ENCODE measurements at regions of chr17 and their contacts with region 1.

Region 1: GRCh38 chr17:65231662-65232335 is 94.6 kb downstream of the RGS9 start:
- DNase-seq: peak; percentile 91
- ATAC-seq: peak; percentile 90
- H3K4me3 ChIP-seq: no peak overlapping the region
- H3K27ac ChIP-seq: no peak overlapping the region
- H3K4me1 ChIP-seq: peaks cover 33% of the 10 kb centered on the region
- H3K27me3 ChIP-seq: no peaks in the 10 kb centered on the region
- CTCF ChIP-seq: peak; percentile 98

Region 2: GRCh38 chr17:65268832-65269231 is 37.0 kb after region 1 on chr17:
- CTCF ChIA-PET with region 1: interaction called, 12 read pairs
- POLR2A ChIA-PET with region 1: no interaction called
- intact Hi-C with region 1: no loop called
- DNase-seq: no peak
- ATAC-seq: no peak
- H3K4me3 ChIP-seq: no peak overlapping the region
- H3K27ac ChIP-seq: no peak overlapping the region
- H3K4me1 ChIP-seq: no peaks in the 10 kb centered on the region
- H3K27me3 ChIP-seq: no peaks in the 10 kb centered on the region
- CTCF ChIP-seq: no peak

Region 3: GRCh38 chr17:65523853-65524664 is 292.3 kb after region 1 on chr17:
- CTCF ChIA-PET with region 1: interaction called, 11 read pairs
- POLR2A ChIA-PET with region 1: no interaction called
- intact Hi-C with region 1: no loop called
- DNase-seq: no peak
- ATAC-seq: no peak
- H3K4me3 ChIP-seq: no peak overlapping the region
- H3K27ac ChIP-seq: no peak overlapping the region
- H3K4me1 ChIP-seq: peaks cover 7% of the 10 kb centered on the region
- H3K27me3 ChIP-seq: no peaks in the 10 kb centered on the region
- CTCF ChIP-seq: no peak